MCF 10A (cell line): ENCODE measurements at regions of chr12 and their contacts with region 1.

Region 1: GRCh38 chr12:58346032-58346632 is 404.8 kb downstream of the ATP23 start:
- DNase-seq: peak; percentile 45
- H3K4me3 Mint-ChIP-seq: no peak overlapping the region
- H3K27ac Mint-ChIP-seq: no peak overlapping the region
- H3K4me1 Mint-ChIP-seq: no peaks in the 10 kb centered on the region
- H3K27me3 Mint-ChIP-seq: no peaks in the 10 kb centered on the region
- CTCF ChIP-seq: peak; percentile 55

Region 2: DNA sequence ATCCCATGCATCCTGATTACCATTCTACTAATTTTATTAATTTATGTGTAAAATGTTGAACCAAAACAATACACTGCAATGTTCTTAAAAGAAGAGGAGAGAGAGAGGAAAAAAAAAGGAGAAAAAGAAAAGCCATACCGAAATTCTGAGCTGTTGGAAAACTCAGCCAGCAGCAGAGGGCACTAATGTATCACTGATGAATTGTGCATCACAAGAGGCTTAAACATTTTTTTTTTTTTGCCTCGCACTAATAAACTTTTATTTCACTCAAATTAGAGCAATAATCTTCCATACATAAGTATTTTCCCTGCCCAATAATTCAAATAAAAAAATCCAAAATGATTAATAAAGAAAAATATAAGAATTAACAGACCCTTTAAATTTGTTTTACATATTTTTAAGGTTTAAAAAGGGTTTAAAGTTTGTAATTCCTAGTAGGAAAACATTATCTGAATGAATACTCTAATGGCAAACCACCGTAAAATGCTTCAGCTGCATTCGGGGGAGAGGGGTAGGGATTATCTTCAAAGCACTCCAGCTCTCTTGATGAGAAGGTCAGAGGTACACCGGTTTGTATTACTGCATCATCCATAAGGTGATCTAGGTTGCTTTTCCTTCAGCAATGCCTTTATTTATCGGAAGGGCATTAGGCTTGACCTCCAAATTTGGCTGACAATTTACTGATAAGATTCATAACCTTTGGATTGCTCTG is 362.8 kb before region 1 on chr12:
- CTCF ChIA-PET with region 1: interaction called, 3 read pairs
- POLR2A ChIA-PET with region 1: no interaction called
- intact Hi-C with region 1: loop called (anchors 2 kb)
- DNase-seq: peak; percentile 65
- H3K4me3 Mint-ChIP-seq: no peak overlapping the region
- H3K27ac Mint-ChIP-seq: no peak overlapping the region
- H3K4me1 Mint-ChIP-seq: peaks cover 6% of the 10 kb centered on the region
- H3K27me3 Mint-ChIP-seq: no peaks in the 10 kb centered on the region
- CTCF ChIP-seq: peak; percentile 72

Region 3: DNA sequence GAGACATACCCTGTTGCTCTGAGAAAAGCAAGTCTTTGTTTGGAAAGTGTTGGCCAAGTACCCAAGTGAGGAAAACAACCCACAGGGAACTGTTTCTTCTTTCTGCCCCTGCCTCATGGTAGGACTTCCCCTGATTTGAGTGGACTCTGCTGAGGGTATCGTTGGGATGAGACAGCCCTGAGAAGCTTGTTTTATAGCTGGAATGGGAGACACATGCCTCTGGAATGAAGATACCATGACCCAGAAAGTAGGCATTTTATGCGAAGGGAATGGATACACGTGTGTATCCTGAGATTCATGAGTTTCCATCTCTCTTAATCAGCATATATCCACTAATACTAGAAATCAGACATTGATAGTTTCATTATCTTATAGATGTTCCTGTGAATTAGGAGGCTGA is 22.5 kb before region 1 on chr12:
- CTCF ChIA-PET with region 1: no interaction called
- POLR2A ChIA-PET with region 1: no interaction called
- intact Hi-C with region 1: no loop called
- DNase-seq: no peak
- H3K4me3 Mint-ChIP-seq: no peak overlapping the region
- H3K27ac Mint-ChIP-seq: no peak overlapping the region
- H3K4me1 Mint-ChIP-seq: no peaks in the 10 kb centered on the region
- H3K27me3 Mint-ChIP-seq: no peaks in the 10 kb centered on the region
- CTCF ChIP-seq: no peak

Region 4: DNA sequence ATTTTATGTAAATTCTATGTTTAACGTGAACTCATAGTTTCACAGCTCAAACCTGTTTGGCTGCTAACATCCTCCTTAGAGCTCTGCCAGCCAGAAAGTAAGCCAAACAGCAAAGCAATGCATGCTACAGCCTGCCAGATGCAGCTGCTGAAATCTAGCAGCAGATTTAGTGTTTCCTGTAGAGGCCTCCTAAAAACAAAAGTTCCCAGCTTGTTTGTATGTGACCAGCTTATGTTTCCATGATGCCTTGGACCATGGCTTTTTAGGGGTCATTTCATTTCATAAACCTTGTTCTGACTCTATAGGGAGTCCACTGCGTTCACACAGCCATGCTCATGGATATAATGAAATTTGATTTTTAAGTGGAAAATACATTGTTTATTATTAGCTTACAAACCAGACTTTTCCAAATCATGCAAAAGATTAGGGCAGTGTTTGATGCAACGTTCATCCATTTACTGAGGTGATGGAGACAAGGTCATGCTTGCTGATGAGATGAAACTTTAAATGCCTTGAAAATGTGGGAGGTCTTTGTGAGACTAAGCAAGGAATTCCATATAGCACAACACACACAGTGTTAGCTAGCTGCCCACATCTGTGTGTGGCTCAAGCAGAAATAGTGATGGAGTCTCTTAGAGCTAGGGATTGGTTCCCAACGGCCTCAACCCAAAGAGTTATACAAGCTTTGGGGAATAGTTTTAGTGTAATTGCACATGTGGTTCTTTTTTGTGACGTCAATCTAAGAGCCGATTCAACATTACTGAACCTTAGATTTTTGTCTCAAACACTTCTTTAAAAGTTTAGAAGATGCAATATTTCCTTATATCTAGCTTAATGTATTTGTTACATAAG is 731.7 kb after region 1 on chr12:
- CTCF ChIA-PET with region 1: no interaction called
- POLR2A ChIA-PET with region 1: no interaction called
- intact Hi-C with region 1: loop called (anchors 2 kb)
- DNase-seq: peak; percentile 49
- H3K4me3 Mint-ChIP-seq: no peak overlapping the region
- H3K27ac Mint-ChIP-seq: peak overlapping the region; percentile 86
- H3K4me1 Mint-ChIP-seq: peaks cover 43% of the 10 kb centered on the region
- H3K27me3 Mint-ChIP-seq: no peaks in the 10 kb centered on the region
- CTCF ChIP-seq: no peak

Region 5: GRCh38 chr12:59113831-59114615 is 767.9 kb after region 1 on chr12:
- CTCF ChIA-PET with region 1: interaction called, 3 read pairs
- POLR2A ChIA-PET with region 1: no interaction called
- intact Hi-C with region 1: loop called (anchors 1 kb)
- DNase-seq: peak; percentile 87
- H3K4me3 Mint-ChIP-seq: no peak overlapping the region
- H3K27ac Mint-ChIP-seq: no peak overlapping the region
- H3K4me1 Mint-ChIP-seq: no peaks in the 10 kb centered on the region
- H3K27me3 Mint-ChIP-seq: no peaks in the 10 kb centered on the region
- CTCF ChIP-seq: peak; percentile 90

Region 6: DNA sequence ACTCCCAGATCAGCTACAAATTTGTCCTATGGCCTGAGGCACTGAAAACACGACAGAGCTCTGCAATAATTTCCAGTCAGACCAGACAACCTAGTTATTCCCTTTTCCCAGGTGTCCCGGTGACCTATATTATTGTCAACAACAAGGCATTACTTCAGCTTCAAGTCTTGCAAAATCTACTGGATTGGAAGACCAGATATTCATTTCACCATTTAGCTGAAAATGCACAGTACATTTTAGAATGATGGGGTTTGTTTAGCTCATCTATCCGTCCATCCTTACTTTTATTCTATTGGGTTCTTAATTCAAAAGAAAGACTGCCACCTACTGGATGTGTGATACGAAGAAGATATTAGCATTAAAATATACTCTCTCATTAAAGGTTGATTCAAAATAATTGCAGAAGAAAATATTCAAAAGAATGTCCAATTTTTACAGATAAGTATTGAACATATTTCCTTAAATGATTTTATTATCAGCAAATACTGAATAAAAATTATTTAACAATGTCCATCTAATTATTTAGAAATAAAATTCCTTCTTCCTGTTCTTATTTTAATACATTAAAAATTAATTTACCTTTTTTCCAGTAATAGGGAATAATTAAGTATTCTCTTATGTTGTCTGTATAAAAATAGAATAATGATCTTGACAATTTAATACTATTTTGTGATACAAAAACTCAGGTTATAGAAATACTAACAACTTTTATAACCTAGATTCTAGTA is 819.0 kb after region 1 on chr12:
- CTCF ChIA-PET with region 1: interaction called, 8 read pairs
- POLR2A ChIA-PET with region 1: no interaction called
- intact Hi-C with region 1: loop called (anchors 2 kb)
- DNase-seq: peak; percentile 56
- H3K4me3 Mint-ChIP-seq: no peak overlapping the region
- H3K27ac Mint-ChIP-seq: no peak overlapping the region
- H3K4me1 Mint-ChIP-seq: no peaks in the 10 kb centered on the region
- H3K27me3 Mint-ChIP-seq: no peaks in the 10 kb centered on the region
- CTCF ChIP-seq: peak; percentile 23